ENCODE measurements at regions of chr1 and their contacts with region 1.

Region 1: GRCh38 chr1:45550401-45551351 is at the start of gene AKR1A1:
- DNase-seq: peak; percentile 74 to 90 (median 84)
- H3K4me3 ChIP-seq: peak within 1 kb of the TSS; percentile 56 to 97 (median 79)
- H3K27ac ChIP-seq: peak within 1 kb of the TSS; percentile 48 to 98 (median 89)
- H3K27me3 ChIP-seq: no peaks in the 10 kb centered on the region
- CTCF ChIP-seq: peak in 37 of 56 donors; percentile 9 to 62 (median 33)
- total RNA-seq, gene AKR1A1: 34.4 to 104 (median 68.7) TPM

Region 2: DNA sequence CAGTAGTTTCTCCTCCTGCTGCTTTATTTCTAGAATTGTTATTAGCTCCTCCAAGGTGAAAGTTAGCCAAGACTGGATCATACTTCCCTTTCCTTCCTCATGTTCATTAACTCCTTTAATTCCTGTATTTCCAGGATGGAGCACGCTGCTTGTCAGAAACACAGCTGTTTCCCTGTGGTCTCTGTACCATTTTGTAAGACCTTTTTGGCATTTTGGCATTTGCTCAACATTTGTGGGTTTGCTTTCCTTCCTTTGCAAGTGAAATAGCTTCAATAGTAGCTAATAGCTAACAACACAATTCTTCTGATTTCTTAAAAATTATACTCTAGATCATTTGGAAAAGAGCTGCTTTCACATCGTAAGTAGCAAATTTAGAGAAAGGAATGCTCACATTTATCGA is 268.3 kb before region 1 on chr1:
- intact Hi-C with region 1: no loop called
- DNase-seq: no peak
- H3K4me3 ChIP-seq: no peak overlapping the region
- H3K27ac ChIP-seq: no peak overlapping the region
- H3K27me3 ChIP-seq: no peaks in the 10 kb centered on the region
- CTCF ChIP-seq: no peak

Region 3: DNA sequence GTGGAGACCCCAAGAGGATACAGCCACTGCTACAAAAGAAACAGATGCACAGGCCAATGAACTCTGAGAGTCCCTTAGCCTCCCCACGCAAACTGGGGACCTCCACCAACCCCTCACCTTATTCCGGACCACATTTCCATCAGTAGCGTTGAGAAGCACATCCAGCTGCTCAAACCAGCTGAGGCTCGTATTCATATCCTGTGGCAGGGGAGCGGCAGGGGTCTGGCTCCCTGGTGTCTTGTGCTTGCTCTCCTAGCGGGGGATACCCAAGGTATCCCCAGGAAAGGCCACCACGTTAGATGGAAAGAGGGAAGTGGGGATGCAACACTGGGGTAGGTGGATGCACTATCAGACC is 51.3 kb before region 1 on chr1:
- intact Hi-C with region 1: loop called (anchors 1 to 5 kb)
- DNase-seq: no peak
- H3K4me3 ChIP-seq: peak overlapping the region; percentile 39 to 92 (median 79)
- H3K27ac ChIP-seq: peak overlapping the region in 55 of 59 donors; percentile 6 to 97 (median 89)
- H3K27me3 ChIP-seq: no peaks in the 10 kb centered on the region
- CTCF ChIP-seq: no peak

Region 4: DNA sequence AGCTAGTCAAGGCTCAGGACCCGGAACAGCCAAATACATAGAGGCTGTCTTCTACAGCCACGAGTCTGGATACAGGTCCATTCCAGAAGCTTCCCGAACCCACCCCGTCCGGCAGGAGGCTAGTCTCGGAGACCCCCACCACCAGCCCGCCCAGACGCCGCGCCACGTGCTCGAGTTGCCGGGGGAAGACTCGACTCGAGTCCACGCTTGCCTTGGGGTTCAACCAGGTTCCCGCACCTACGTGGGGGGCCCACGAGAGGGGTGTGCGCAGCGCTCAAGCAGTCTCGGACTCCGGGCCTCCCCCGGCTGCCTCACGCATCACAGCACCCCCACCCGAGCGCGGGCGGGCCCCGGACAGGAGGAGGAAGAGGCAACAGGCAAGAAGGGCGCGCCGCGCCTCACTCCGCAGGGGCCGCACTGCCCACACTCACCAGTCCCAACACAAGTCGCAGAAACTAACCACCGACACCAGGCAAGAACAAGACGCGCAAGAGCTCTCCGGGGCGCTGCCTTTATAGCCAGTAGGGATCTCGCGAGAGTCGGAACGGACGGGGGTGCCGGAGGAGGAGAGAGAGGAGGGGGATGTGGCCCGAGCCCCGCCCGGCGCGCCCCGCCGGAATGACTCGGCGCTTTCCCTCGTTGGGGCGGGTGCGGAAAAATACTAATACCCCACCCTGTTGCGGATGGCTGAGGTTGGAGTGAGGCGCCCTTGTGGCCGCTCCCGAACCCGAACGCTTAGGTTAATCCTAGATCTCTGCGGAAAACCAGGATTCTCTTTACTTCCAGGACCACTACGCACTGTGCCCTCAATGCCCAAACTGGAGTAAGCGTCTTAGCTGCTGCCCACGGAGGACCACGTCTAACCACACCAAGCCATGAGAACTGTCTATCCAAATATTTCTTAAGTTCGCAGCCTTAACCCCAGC is 29.0 kb before region 1 on chr1 and contains the start of gene PRDX1:
- intact Hi-C with region 1: loop called (anchors 1 to 2 kb)
- DNase-seq: peak; percentile 93 to 99 (median 97)
- H3K4me3 ChIP-seq: peak within 1 kb of the TSS; percentile 67 to 100 (median 97)
- H3K27ac ChIP-seq: peak within 1 kb of the TSS; percentile 80 to 100 (median 97)
- H3K27me3 ChIP-seq: no peaks in the 10 kb centered on the region
- CTCF ChIP-seq: peak in 40 of 56 donors; percentile 10 to 63 (median 35)
- total RNA-seq, gene PRDX1: 252 to 454 (median 339) TPM

Region 5: DNA sequence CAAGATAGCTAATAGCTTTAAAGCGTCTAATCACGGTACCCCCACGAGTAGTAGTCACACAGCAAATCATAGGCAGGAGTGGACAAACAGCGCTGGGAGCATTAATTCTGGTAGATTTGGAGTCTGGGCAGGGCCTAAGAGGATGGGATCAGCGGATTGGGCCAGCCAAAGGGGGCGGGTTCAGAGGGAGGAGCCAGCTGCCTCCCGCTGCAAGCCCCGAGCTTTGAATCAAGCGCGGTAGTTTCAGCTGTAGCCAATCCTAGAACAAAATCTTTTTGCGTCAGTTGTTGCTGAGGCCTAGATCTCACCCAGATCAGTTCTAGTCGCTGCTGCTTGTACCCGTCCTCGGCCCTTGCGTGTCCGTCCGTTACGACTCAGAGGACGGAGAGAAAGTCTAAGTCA is 32.6 kb after region 1 on chr1:
- intact Hi-C with region 1: loop called (anchors 2 kb)
- DNase-seq: peak; percentile 84 to 97 (median 96)
- H3K4me3 ChIP-seq: peak overlapping the region; percentile 63 to 100 (median 93)
- H3K27ac ChIP-seq: peak overlapping the region in 58 of 59 donors; percentile 23 to 96 (median 84)
- H3K27me3 ChIP-seq: no peaks in the 10 kb centered on the region
- CTCF ChIP-seq: peak in 6 of 56 donors; percentile 14 to 36 (median 22)

Region 6: DNA sequence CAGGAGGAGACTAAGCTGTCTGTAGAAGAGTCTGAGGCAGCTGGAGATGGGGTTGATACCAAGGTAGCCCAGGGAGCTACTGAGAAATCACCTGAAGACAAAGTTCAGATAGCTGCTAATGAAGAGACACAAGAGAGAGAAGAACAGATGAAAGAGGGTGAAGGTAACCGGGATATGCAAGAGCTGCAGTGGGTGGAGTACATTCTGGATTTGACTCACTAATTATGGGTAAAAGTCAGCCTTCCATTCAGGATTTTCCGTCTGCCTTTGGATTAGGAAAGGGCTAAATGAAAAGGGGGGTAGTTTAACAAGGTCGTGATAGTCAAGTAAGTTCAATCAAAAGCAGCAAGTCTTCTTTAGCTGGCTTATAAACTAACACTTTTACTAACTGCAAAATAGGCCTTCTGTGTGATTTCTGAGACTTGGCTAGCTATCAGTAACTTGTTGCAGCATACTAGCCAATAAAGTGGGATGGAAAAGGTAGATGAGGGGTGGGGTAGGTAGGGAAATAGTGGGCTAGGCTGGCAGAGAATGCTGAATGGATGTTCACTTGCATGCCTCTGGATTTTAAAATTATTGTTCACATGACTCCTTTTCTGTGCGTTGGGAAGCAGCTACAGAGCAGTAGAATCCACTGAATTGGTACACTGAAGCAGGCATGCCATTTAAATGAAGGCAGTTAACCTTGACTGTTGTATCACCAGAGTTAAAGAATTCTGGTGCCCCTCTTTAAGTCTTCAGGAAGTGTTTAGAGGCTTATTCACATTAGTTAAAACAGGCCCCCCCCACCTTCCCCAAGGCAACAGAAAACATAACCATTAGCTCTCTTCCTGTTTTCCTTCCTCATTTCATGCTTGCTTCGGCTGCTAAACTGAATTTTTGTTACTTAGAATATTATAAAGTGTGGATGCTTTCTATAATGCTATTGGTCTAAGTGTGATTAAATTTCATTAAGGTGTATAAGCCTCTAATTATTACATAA is 57.8 kb after region 1 on chr1:
- intact Hi-C with region 1: no loop called
- DNase-seq: no peak
- H3K4me3 ChIP-seq: no peak overlapping the region
- H3K27ac ChIP-seq: peak overlapping the region in 32 of 59 donors; percentile 6 to 73 (median 38)
- H3K27me3 ChIP-seq: no peaks in the 10 kb centered on the region
- CTCF ChIP-seq: no peak